Natural killer cell (primary cell): ENCODE measurements at regions of chr2 and their contacts with region 1.

Region 1: DNA sequence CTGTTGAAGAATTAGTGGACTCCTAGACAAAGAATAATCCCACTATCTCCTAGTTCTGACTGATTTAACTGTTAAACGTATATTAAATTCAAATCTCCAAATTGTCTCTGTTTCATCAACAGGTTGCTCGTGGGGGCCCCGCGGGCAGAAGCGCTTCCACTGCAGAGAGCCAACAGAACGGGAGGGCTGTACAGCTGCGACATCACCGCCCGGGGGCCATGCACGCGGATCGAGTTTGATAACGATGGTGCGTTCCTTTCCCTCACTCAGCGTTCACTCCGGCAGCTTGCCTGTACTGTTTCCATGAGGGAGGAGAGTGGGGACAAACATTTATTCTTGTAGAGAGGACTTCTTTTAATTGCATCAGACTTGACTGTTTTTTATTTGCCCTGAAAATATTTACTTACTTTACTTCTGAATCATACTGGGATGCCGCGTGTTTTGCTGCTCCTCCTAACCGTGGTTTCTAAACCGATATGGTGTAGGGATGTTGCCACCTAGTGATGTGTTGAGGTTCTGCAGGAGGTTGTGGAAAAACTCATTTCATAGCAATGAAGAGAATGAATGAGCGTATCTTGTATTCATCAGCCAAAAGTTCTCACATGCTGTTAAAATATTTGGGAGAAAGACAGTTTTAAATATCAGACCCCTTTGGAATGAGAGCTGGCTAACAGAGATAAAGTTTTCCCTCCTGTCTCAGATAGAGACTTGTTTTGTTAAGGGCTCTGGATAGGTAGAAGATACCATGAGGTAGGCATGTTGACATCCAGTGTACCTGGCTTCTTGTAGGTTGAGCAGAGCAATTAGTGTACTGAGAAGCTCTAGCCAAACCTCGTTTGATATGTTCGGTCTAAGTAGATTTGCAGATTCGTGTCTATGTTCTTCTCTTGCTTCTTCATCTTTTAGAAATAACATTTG is 38.3 kb downstream of the ITGA6 start:
- DNase-seq: peak; percentile 40 to 88
- ATAC-seq: peak; percentile 68 to 80 (median 76)
- H3K4me3 ChIP-seq: no peak overlapping the region
- H3K4me3 Mint-ChIP-seq: peak overlapping the region; percentile 57
- H3K27ac ChIP-seq: no peak overlapping the region
- H3K27ac Mint-ChIP-seq: peak overlapping the region; percentile 64 to 74
- H3K4me1 ChIP-seq: peaks cover 40% of the 10 kb centered on the region
- H3K4me1 Mint-ChIP-seq: peaks cover 54% of the 10 kb centered on the region in 2 donors
- H3K27me3 ChIP-seq: no peaks in the 10 kb centered on the region
- H3K27me3 Mint-ChIP-seq: no peaks in the 10 kb centered on the region
- CTCF ChIP-seq: peak; percentile 87

Region 2: DNA sequence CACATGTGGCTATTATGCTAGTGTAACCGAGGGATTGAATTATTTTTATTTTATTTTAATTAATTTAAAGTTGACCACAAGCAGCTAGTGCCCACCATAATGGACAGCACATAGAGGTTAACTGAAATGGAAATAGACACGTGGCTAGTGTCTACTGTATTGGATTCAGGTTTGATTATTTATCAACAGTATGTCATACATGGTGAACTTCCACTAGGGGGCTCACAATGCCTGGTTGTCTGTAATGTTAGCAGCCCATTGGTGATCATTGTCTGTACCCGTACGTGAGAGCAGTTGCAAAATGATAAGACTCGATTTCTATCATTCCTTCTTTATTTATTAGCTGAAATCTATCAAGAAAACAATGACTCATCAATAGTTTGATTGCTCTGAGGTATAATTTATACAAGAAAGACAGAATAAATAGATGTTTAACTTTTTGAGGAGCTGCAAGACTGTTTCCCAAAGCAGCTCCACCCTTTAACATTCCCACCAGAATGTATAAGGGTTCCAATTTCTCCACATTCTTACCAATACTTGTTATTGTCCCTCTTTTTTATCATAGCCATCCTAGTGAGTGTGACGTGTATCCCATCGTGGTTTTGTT is 866.9 kb before region 1 on chr2:
- intact Hi-C with region 1: loop called (anchors 5 kb)
- DNase-seq: peak in 1 of 2 donors; percentile 78
- ATAC-seq: peak; percentile 84 to 100 (median 97)
- H3K4me3 ChIP-seq: no peak overlapping the region
- H3K4me3 Mint-ChIP-seq: no peak overlapping the region
- H3K27ac ChIP-seq: no peak overlapping the region
- H3K27ac Mint-ChIP-seq: no peak overlapping the region
- H3K4me1 ChIP-seq: no peaks in the 10 kb centered on the region
- H3K4me1 Mint-ChIP-seq: peaks cover 0 to 5% of the 10 kb centered on the region in 2 donors
- H3K27me3 ChIP-seq: no peaks in the 10 kb centered on the region
- H3K27me3 Mint-ChIP-seq: peaks cover 16 to 32% of the 10 kb centered on the region in 2 donors
- CTCF ChIP-seq: peak; percentile 79

Region 3: GRCh38 chr2:171811245-171811628 is 654.4 kb before region 1 on chr2:
- intact Hi-C with region 1: loop called (anchors 5 kb)
- DNase-seq: peak in 1 of 2 donors; percentile 46
- ATAC-seq: no peak
- H3K4me3 ChIP-seq: no peak overlapping the region
- H3K4me3 Mint-ChIP-seq: no peak overlapping the region
- H3K27ac ChIP-seq: no peak overlapping the region
- H3K27ac Mint-ChIP-seq: no peak overlapping the region
- H3K4me1 ChIP-seq: no peaks in the 10 kb centered on the region
- H3K4me1 Mint-ChIP-seq: no peaks in the 10 kb centered on the region
- H3K27me3 ChIP-seq: no peaks in the 10 kb centered on the region
- H3K27me3 Mint-ChIP-seq: no peaks in the 10 kb centered on the region
- CTCF ChIP-seq: no peak

Region 4: GRCh38 chr2:172172513-172173173 is 293.0 kb before region 1 on chr2:
- intact Hi-C with region 1: loop called (anchors 1 kb)
- DNase-seq: peak; percentile 48 to 77
- ATAC-seq: peak; percentile 81 to 96 (median 96)
- H3K4me3 ChIP-seq: peak overlapping the region; percentile 41
- H3K4me3 Mint-ChIP-seq: peak overlapping the region; percentile 62
- H3K27ac ChIP-seq: no peak overlapping the region
- H3K27ac Mint-ChIP-seq: no peak overlapping the region
- H3K4me1 ChIP-seq: peaks cover 5% of the 10 kb centered on the region
- H3K4me1 Mint-ChIP-seq: peaks cover 11 to 13% of the 10 kb centered on the region in 2 donors
- H3K27me3 ChIP-seq: peaks cover 4% of the 10 kb centered on the region
- H3K27me3 Mint-ChIP-seq: peaks cover 9 to 10% of the 10 kb centered on the region in 2 donors
- CTCF ChIP-seq: peak; percentile 58

Region 5: GRCh38 chr2:172427990-172428831 is 37.5 kb before region 1 on chr2:
- intact Hi-C with region 1: loop called (anchors 2 kb)
- DNase-seq: peak; percentile 35 to 82
- ATAC-seq: peak; percentile 42 to 50 (median 50)
- H3K4me3 ChIP-seq: peak overlapping the region; percentile 66
- H3K4me3 Mint-ChIP-seq: peak overlapping the region; percentile 86
- H3K27ac ChIP-seq: no peak overlapping the region
- H3K27ac Mint-ChIP-seq: peak overlapping the region; percentile 48 to 78
- H3K4me1 ChIP-seq: peaks cover 31% of the 10 kb centered on the region
- H3K4me1 Mint-ChIP-seq: peaks cover 50 to 53% of the 10 kb centered on the region in 2 donors
- H3K27me3 ChIP-seq: no peaks in the 10 kb centered on the region
- H3K27me3 Mint-ChIP-seq: peaks cover 0 to 2% of the 10 kb centered on the region in 2 donors
- CTCF ChIP-seq: no peak

Region 6: DNA sequence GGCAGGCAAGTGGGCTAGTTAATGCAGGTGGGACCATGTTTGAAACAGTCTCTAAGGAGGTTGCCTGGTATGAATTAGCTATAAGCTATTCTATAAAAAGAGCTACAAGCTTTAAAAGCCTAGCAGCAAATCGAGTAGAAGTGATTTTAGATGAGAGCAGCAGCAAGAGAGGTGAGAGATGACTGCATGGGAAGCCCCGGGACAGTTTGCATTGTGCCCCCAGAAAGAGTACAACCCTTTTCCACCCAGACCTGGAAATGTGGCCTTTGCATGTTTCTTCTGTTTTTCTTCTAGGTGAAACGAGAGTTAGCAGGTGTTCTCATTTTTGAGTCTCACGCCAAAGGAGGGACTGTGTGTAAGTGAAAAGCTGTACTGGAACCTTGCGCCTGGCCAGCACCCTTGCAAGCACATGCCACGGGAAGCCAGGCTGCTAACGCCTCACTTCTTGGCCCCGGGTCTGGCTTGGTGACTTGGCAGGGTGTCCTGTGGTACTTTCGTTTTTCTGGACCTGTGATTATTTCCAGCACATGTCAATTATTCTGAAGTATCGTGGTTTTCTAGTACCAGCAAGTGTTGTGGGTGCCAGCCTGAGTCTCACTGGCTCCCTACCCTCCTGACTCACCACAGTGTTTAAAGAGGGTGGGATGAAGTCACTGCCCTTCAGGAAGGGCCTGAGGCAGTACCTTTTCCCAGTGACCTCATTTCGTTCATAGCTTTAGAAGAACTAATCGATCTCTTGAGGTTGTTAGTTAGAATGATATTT is 519.6 kb after region 1 on chr2:
- intact Hi-C with region 1: no loop called
- DNase-seq: no peak
- ATAC-seq: peak in 1 of 3 donors; percentile 20
- H3K4me3 ChIP-seq: no peak overlapping the region
- H3K4me3 Mint-ChIP-seq: no peak overlapping the region
- H3K27ac ChIP-seq: no peak overlapping the region
- H3K27ac Mint-ChIP-seq: no peak overlapping the region
- H3K4me1 ChIP-seq: no peaks in the 10 kb centered on the region
- H3K4me1 Mint-ChIP-seq: peaks cover 0 to 10% of the 10 kb centered on the region in 2 donors
- H3K27me3 ChIP-seq: no peaks in the 10 kb centered on the region
- H3K27me3 Mint-ChIP-seq: peaks cover 3 to 23% of the 10 kb centered on the region in 2 donors
- CTCF ChIP-seq: no peak